GM12878 (cell line): ENCODE measurements at regions of chr10 and their contacts with region 1.

Region 1: GRCh38 chr10:93816123-93816747 is 58.5 kb downstream of the LGI1 start:
- DNase-seq: no peak
- ATAC-seq: peak; percentile 83
- H3K4me3 ChIP-seq: no peak overlapping the region
- H3K27ac ChIP-seq: no peak overlapping the region
- H3K4me1 ChIP-seq: no peaks in the 10 kb centered on the region
- H3K27me3 ChIP-seq: peaks cover 0 to 14% of the 10 kb centered on the region in 2 experiments; a peak in 2 of 4 replicates
- CTCF ChIP-seq: peak; percentile 64 to 71 (median 64)
- EP300 ChIP-seq: no peak
- POLR2A ChIP-seq: no peak
- RAD21 ChIP-seq: peak; percentile 68

Region 2: DNA sequence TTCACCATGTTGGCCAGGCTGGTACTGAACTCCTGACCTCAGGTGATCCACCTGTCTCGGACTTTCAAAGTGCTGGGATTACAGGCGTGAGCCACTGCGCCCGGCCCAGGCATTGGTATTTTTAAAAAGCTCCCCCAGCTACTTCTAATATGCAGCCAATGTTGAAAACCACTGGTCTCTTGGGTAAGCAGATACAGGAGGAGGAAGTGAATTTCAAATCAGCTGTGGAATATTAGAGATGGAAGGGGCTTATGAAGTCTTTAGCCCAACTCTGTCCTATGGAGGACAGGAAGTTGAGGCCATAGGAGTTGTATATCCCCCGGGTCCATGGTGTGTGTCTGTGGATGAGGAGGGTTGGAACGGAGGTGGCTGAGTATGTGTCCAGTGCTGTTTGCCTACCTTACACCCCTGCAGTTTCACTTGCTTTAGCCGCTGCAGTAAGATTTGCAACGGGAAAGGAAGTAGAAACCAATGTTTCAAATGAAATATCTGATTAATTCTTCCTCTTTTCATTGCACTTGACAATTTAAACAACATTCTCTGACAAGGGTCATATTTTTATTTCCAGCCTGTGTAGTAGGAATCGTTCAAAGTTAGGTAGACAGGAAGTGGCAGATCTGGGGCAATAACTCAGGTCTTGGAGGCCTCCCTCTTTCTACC is 200.5 kb before region 1 on chr10:
- CTCF ChIA-PET with region 1: no interaction called
- POLR2A ChIA-PET with region 1: no interaction called
- RAD21 ChIA-PET with region 1: no interaction called
- SMC1A ChIA-PET with region 1: no interaction called
- in situ Hi-C with region 1: no loop called
- intact Hi-C with region 1: no loop called
- DNase-seq: no peak
- ATAC-seq: no peak
- H3K4me3 ChIP-seq: no peak overlapping the region
- H3K27ac ChIP-seq: no peak overlapping the region
- H3K4me1 ChIP-seq: peaks cover 4% of the 10 kb centered on the region
- H3K27me3 ChIP-seq: no peaks in the 10 kb centered on the region; a peak in 1 of 4 replicates
- CTCF ChIP-seq: no peak
- EP300 ChIP-seq: no peak
- POLR2A ChIP-seq: no peak
- RAD21 ChIP-seq: no peak

Region 3: GRCh38 chr10:93697207-93697606 is 119.0 kb before region 1 on chr10:
- CTCF ChIA-PET with region 1: interaction called, 46 read pairs
- POLR2A ChIA-PET with region 1: no interaction called
- RAD21 ChIA-PET with region 1: interaction called, 16 read pairs
- SMC1A ChIA-PET with region 1: interaction called, 36 read pairs
- in situ Hi-C with region 1: loop called (anchors 5 kb)
- intact Hi-C with region 1: loop called (anchors 1 kb)
- DNase-seq: no peak
- ATAC-seq: no peak
- H3K4me3 ChIP-seq: no peak overlapping the region
- H3K27ac ChIP-seq: no peak overlapping the region
- H3K4me1 ChIP-seq: no peaks in the 10 kb centered on the region
- H3K27me3 ChIP-seq: no peaks in the 10 kb centered on the region
- CTCF ChIP-seq: peak in 1 of 3 experiments; percentile 15; a peak in 2 of 6 replicates
- EP300 ChIP-seq: no peak
- POLR2A ChIP-seq: no peak
- RAD21 ChIP-seq: no peak

Region 4: GRCh38 chr10:93746844-93747284 is 69.4 kb before region 1 on chr10:
- CTCF ChIA-PET with region 1: interaction called, 31 read pairs
- POLR2A ChIA-PET with region 1: no interaction called
- RAD21 ChIA-PET with region 1: interaction called, 6 read pairs
- SMC1A ChIA-PET with region 1: interaction called, 13 read pairs
- in situ Hi-C with region 1: no loop called
- intact Hi-C with region 1: loop called (anchors 5 kb)
- DNase-seq: no peak
- ATAC-seq: peak; percentile 55
- H3K4me3 ChIP-seq: no peak overlapping the region
- H3K27ac ChIP-seq: no peak overlapping the region
- H3K4me1 ChIP-seq: no peaks in the 10 kb centered on the region; the same call in none of the 2 replicates
- H3K27me3 ChIP-seq: no peaks in the 10 kb centered on the region
- CTCF ChIP-seq: peak; percentile 26 to 44 (median 41); a peak in 4 of 6 replicates
- EP300 ChIP-seq: no peak
- POLR2A ChIP-seq: no peak
- RAD21 ChIP-seq: 0 out of 2 replicates have a peak, but pooled peaks have one; percentile 5

Region 5: DNA sequence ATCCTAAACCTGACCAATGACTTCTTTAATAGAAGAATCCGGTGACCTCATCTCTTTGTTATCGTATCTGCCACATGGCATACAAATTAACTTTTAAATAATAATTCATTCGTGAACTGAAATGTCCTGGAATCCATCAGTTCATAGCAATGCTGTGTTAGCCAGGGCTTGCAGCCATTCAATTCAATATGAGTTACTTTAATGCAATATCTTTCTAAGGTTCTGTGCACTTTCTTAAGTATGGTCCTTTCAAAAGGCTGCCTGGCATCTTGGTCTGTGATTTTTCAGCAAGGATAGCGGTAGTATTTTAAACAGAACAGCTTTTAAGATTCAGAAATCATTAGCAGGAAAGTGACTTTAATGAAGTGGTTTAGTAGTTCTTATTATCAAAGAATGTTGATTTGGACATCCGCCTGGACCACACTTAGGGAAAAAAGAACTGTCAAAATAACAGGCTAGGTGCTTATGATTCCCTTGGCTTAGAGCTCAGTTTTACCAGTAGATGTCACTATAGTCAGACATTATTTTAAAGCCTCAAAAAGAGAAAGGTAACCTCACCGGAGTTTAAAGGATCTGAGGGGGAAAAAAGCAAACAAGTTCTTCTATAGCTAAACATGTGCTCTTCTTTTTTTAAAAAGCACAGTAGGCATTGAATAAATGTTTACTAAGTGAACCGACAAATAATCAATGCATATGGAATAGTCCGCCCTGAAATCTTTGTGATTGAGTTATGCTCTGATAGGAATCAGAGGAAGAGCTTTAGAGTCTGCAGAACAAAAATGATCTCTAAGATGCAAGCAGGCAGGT is 100.2 kb after region 1 on chr10:
- CTCF ChIA-PET with region 1: interaction called, 11 read pairs
- POLR2A ChIA-PET with region 1: no interaction called
- RAD21 ChIA-PET with region 1: interaction called, 3 read pairs
- SMC1A ChIA-PET with region 1: interaction called, 3 read pairs
- in situ Hi-C with region 1: no loop called
- intact Hi-C with region 1: no loop called
- DNase-seq: no peak
- ATAC-seq: peak; percentile 41; the same call in 2 of the 3 replicates
- H3K4me3 ChIP-seq: no peak overlapping the region
- H3K27ac ChIP-seq: no peak overlapping the region
- H3K4me1 ChIP-seq: no peaks in the 10 kb centered on the region
- H3K27me3 ChIP-seq: no peaks in the 10 kb centered on the region
- CTCF ChIP-seq: peak; percentile 33 to 41 (median 41); a peak in 5 of 6 replicates
- EP300 ChIP-seq: no peak
- POLR2A ChIP-seq: no peak
- RAD21 ChIP-seq: peak; percentile 46